Endothelial cell of umbilical vein (primary cell): ENCODE measurements at regions of chr5 and their contacts with region 1.

Region 1: DNA sequence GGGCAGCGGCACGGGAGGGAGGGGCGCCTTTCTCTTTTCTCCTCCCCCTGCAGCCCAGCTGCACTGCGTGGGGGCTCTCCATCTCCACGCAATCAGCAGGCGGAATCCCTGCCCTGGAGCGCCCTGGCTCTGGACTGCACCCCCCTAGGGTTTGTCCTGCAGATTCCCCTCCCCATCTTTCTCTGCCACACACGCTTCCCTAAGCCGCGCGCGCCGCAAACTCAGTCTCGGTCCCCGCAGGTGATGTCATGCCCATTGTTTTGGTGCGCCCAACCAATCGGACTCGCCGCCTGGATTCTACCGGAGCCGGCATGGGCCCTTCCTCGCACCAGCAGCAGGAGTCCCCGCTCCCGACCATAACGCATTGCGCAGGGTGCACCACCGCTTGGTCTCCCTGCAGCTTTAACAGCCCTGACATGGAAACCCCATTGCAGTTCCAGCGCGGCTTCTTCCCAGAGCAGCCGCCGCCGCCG is at the start of gene KCNN2:
- DNase-seq: peak; percentile 71
- H3K4me3 ChIP-seq: peak within 1 kb of the TSS; percentile 13 to 49 (median 28)
- H3K27ac ChIP-seq: no peak within 1 kb of the TSS
- H3K4me1 ChIP-seq: peaks cover 8% of the 10 kb centered on the region
- H3K27me3 ChIP-seq: peaks cover 37 to 66% of the 10 kb centered on the region in 2 experiments
- CTCF ChIP-seq: no peak
- POLR2A ChIP-seq: no peak
- total RNA-seq, gene KCNN2: 1.3 and 1.9 TPM in 2 replicates

Region 2: DNA sequence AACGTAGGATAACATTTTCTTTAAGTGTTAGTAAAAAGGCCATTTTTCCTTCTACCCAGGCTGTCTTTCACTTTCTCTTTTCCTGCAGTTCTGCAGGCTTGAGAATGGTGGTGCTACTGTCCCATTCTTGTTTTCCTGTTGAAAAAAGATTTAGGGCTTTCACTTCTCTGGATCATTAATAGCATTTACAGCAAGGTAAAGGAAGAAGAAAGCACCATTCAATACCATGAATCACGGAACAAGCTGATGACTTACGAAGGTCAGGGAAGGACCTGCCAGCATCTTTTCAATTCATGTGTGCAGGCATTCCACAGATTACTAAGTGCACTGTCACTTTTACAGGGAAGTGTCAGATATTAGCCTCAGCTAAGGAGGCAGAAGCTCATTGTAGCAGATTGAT is 555.5 kb before region 1 on chr5:
- CTCF ChIA-PET with region 1: interaction called, 6 read pairs
- POLR2A ChIA-PET with region 1: no interaction called
- dilution Hi-C with region 1: no loop called
- intact Hi-C with region 1: loop called (anchors 5 kb)
- DNase-seq: peak; percentile 71
- H3K4me3 ChIP-seq: peak overlapping the region in 1 of 3 experiments; percentile 24
- H3K27ac ChIP-seq: peak overlapping the region; percentile 2
- H3K4me1 ChIP-seq: peaks cover 14% of the 10 kb centered on the region
- H3K27me3 ChIP-seq: no peaks in the 10 kb centered on the region
- CTCF ChIP-seq: peak; percentile 34 to 38
- POLR2A ChIP-seq: no peak

Region 3: DNA sequence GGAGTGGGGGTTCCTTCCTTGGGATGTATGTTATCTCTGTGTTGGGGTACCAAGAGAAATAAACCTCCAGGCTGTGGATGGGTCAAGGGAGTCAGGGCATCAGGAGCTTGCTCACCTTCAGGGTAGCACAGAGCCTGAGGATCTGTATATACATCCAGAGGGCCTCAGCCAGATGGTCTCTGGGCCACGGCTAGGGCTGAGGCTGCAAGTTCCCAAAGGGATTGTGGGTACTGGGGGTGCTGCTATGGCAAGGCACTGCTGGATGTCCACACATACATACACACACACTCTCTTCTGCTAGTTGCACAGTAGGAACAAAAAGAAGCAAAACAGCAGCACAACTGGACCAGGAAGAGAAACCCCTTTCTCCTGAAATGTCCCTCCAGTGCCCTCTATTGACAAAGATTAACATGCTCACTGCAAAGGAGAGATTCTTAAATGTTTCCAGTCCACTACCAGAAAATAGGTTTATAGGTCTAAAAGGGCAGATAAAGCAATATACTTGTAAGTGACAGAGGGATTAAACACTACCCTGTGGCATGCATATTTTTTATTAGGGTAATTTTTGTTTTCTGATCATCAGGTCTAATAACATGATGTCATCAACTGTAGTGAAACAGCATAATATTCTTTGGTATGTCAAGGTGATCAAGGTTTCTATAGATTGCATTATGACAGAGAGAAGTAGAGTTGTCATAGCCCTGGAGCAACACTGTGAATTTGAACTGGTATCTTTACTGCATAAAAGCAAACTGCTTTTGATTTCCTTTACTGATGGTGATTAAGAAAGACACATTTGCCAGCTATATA is 56.2 kb before region 1 on chr5:
- CTCF ChIA-PET with region 1: no interaction called
- POLR2A ChIA-PET with region 1: no interaction called
- dilution Hi-C with region 1: no loop called
- intact Hi-C with region 1: loop called (anchors 2 kb)
- DNase-seq: peak; percentile 41
- H3K4me3 ChIP-seq: no peak overlapping the region
- H3K27ac ChIP-seq: no peak overlapping the region
- H3K4me1 ChIP-seq: no peaks in the 10 kb centered on the region
- H3K27me3 ChIP-seq: peaks cover 4 to 5% of the 10 kb centered on the region in 2 experiments
- CTCF ChIP-seq: peak in 1 of 2 donors; percentile 32
- POLR2A ChIP-seq: no peak

Region 4: GRCh38 chr5:114325541-114325940 is 36.2 kb before region 1 on chr5:
- CTCF ChIA-PET with region 1: interaction called, 3 read pairs
- POLR2A ChIA-PET with region 1: no interaction called
- dilution Hi-C with region 1: no loop called
- intact Hi-C with region 1: loop called (anchors 2 kb)
- DNase-seq: peak; percentile 98
- H3K4me3 ChIP-seq: no peak overlapping the region
- H3K27ac ChIP-seq: peak overlapping the region; percentile 32
- H3K4me1 ChIP-seq: peaks cover 24% of the 10 kb centered on the region
- H3K27me3 ChIP-seq: no peaks in the 10 kb centered on the region
- CTCF ChIP-seq: no peak
- POLR2A ChIP-seq: no peak